GM10248 (cell line): ENCODE measurements at regions of chr2 and their contacts with region 1.

Region 1: GRCh38 chr2:6896930-6897759 is 19.6 kb downstream of the RSAD2 start:
- DNase-seq: peak; percentile 31
- CTCF ChIP-seq: peak; percentile 65

Region 2: GRCh38 chr2:6617794-6618193 is 279.4 kb before region 1 on chr2:
- CTCF ChIA-PET with region 1: no interaction called
- POLR2A ChIA-PET with region 1: no interaction called
- DNase-seq: no peak
- CTCF ChIP-seq: no peak

Region 3: GRCh38 chr2:6810961-6811360 is 86.2 kb before region 1 on chr2:
- CTCF ChIA-PET with region 1: no interaction called
- POLR2A ChIA-PET with region 1: no interaction called
- DNase-seq: no peak
- CTCF ChIP-seq: no peak

Region 4: DNA sequence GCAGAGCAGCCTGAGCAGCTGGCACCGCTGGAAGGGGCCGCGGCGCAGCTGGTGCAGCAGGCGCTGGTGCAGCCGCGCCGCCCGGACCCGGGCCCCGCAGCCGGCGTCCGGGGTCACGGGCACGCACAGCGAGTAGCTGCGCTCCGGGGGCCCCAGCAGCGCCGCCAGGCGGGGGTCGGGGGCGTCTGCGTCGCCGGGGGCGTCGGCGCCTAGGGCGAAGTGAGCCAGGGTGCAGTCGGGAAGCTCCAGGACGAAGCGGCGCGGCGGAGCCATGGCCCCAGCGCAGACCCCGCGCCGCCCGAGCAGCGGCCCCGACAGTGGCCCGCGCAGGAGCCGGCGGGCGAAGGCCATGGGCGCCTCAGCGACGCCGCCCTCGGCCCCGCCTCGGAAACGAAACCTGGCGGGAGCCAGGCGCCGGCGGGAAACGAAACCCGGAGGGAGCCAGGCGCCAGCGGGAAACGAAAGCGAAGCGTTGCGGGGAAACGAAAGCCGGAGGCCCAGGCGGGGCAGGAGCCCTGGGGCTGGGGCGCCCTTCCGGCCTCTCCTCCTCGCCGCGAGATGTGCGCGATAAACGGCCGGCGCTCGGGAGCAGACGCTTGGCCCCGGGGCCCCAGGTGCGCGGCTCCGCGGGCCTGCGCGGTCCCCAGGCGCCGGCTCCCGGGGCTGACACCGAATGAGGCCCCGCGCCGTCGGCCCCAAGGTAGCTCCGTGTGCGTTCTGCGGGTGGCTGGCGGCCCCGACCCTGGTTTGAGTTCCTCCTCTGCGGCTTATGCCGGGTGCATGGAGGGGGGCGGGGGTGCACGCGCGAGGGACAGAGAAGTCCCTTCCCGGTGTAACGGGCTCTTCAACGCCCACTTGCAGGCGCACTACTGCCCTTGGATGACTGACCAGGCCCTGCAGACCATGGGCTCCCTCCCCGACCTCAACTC is 31.5 kb before region 1 on chr2 and contains the start of gene CMPK2:
- CTCF ChIA-PET with region 1: interaction called, 12 read pairs
- POLR2A ChIA-PET with region 1: no interaction called
- DNase-seq: peak; percentile 87
- CTCF ChIP-seq: no peak

Region 5: DNA sequence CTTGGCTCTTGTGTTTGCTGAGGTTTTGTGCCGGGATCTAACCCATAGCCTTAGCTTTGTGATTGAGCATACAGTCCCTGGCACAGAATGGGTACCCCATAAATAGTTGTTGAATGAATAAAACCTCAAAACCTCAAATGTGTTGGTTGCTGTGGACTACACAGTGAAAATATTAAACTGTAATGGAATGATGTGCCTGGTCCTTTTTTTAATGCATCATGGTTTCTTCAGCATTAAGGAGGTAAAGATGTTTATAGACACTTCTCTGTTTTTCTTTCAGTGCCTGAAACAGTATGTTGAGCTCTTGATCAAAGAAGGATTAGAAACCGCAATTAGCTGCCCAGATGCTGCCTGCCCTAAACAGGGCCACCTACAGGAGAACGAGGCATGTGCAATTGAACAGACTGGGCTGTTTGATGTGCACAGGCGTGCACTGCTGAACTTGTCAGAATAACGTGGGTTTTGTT is 117.1 kb after region 1 on chr2:
- CTCF ChIA-PET with region 1: interaction called, 10 read pairs
- POLR2A ChIA-PET with region 1: no interaction called
- DNase-seq: peak; percentile 43
- CTCF ChIP-seq: peak; percentile 51

Region 6: DNA sequence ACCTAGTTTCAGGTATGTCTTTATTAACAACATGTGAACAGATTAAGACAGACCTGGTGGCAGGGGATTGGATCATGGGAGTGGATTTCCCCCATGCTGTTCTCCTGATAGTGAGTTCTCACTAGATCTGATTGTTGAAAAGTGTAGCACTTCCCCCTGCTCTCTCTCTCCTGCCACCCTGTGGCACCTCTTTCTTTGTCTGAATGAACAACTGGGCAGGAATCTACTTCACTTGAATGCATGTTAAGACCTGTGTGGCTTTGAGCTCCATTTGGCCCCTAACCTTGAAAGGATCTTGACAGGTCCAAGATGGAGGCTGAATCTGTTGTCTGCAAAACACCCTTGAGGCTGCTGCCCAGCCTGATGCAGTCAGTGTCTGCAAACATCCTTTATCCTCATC is 214.5 kb after region 1 on chr2:
- CTCF ChIA-PET with region 1: no interaction called
- POLR2A ChIA-PET with region 1: no interaction called
- DNase-seq: no peak
- CTCF ChIP-seq: no peak